ENCODE measurements at regions of chr14 and their contacts with region 1.

Region 1: DNA sequence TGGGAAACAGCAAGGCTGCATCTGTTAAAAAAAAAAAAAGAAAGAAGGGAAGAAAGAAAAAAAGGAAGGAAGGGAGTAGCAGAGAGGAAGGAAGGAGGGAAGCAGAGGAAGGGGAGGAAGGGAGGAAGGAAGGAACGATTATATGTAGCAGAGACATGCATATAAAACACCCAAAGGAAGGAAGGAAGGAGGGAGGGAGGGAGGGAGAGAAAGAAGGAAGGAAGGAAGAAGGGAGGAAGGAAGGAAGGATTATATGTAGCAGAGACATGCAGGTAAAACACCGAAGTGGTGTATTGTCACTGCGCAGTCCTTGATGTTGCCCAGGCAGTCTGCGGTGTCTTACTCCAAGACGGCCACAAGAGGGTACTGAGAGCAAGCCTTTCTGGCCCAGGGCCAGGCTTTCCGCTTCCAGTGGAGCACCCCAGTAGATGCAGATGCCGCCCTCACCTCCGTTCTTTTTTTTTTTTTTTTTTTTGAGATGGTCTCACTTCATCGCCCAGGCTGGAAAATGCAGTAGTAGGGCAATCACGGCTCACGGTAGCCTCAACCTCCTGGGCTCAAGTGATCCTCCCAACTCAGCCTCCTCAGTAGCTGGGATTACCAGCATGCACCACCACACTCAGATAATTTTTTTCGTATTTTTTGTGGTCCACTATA is 5.8 kb upstream of the LBHD2 start:
- DNase-seq: peak; percentile 86 to 87
- ATAC-seq: peak; percentile 26 to 35; a peak in 4 of 6 replicates
- H3K4me3 ChIP-seq: no peak overlapping the region
- H3K27ac ChIP-seq: peak overlapping the region in 1 of 2 experiments; percentile 56; a peak in 3 of 6 replicates
- H3K4me1 ChIP-seq: peaks cover 21% of the 10 kb centered on the region
- CTCF ChIP-seq: peak; percentile 75
- EP300 ChIP-seq: no peak
- POLR2A ChIP-seq: no peak
- RAD21 ChIP-seq: peak; percentile 73 to 77

Region 2: DNA sequence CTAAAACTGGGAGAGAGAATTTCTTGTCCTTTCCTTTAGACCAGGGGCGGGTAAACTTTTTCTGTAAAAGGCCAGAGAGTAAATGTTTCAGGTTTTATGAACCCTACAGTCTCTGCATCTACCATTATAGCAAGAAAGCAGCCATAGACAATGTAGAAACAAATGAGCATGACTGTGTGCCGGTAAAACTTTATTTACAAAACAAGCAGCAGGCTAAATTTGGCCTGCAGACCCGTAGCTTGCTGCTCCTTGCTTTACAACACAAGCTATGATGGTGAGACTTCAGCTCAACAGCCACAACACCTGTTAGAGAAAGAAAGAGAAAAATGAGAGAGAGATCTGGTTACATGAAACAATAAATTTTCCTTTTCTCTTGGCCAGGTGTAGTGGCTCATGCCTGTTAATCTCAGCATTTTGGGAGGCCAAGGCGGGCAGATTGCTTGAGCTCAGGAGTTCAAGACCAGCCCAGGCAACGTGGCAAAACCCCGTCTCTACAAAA is 16.7 kb before region 1 on chr14:
- CTCF ChIA-PET with region 1: interaction called, 14 read pairs
- POLR2A ChIA-PET with region 1: no interaction called
- DNase-seq: no peak
- ATAC-seq: no peak
- H3K4me3 ChIP-seq: no peak overlapping the region
- H3K27ac ChIP-seq: no peak overlapping the region
- H3K4me1 ChIP-seq: peaks cover 43% of the 10 kb centered on the region
- CTCF ChIP-seq: no peak
- EP300 ChIP-seq: no peak
- POLR2A ChIP-seq: no peak
- RAD21 ChIP-seq: no peak

Region 3: DNA sequence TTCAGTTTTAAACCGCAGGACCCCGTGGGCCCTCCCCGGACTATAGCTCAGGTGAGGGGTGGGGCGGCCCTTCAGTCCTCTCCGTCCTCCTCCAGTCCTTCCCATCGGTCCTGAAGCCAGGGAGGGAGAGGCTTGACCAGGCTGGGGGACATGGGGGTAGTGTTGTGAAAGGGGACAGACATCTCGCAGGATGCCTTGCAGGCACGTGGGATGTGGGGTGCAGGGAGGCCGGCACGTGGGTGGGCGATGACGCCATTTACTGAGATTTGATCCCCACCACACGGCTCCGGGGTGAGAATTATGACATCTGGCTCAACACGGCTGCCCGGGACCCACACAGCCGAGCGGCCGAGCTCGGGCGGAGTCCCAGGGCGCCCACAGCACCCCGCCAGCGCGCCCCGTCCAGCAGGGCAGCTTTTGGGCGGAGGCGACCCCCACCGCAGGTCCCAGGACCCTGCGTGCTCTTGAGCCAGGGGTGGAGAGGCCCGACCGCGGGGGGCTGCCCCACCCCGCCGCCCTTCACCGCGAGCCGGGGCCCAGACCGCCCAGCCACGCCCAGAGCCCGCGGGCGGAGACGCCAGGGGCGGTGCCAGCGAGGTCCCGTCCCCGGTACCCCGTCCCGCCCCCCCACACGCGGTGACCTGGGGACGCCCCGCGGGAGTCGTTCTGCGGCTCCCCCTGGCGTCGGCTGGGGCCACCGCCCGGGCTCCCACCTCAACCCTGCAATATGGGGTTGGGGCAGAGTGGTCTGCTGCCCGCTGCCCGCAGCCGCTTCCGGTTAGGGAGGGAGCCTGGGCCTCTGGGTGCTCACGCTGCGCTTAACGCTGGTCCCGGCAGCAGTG is 13.0 kb after region 1 on chr14:
- CTCF ChIA-PET with region 1: interaction called, 259 read pairs
- POLR2A ChIA-PET with region 1: no interaction called
- DNase-seq: peak in 1 of 2 experiments; percentile 88
- ATAC-seq: peak; percentile 76 to 80
- H3K4me3 ChIP-seq: peak overlapping the region; percentile 52
- H3K27ac ChIP-seq: peak overlapping the region; percentile 88 to 98
- H3K4me1 ChIP-seq: peaks cover 21% of the 10 kb centered on the region
- CTCF ChIP-seq: peak; percentile 67
- EP300 ChIP-seq: no peak
- POLR2A ChIP-seq: no peak; the same call in 1 of the 2 replicates
- RAD21 ChIP-seq: peak; percentile 22 to 69; a peak in 4 of 5 replicates